Dendritic cell treated with granulocyte-macrophage colony-stimulating factor and Interleukin-4, amounts not matched to agents 40 ng/mL and 50 ng/mL, for 4 days (primary cell): ENCODE measurements at regions of chr19 and their contacts with region 1.

Region 1: DNA sequence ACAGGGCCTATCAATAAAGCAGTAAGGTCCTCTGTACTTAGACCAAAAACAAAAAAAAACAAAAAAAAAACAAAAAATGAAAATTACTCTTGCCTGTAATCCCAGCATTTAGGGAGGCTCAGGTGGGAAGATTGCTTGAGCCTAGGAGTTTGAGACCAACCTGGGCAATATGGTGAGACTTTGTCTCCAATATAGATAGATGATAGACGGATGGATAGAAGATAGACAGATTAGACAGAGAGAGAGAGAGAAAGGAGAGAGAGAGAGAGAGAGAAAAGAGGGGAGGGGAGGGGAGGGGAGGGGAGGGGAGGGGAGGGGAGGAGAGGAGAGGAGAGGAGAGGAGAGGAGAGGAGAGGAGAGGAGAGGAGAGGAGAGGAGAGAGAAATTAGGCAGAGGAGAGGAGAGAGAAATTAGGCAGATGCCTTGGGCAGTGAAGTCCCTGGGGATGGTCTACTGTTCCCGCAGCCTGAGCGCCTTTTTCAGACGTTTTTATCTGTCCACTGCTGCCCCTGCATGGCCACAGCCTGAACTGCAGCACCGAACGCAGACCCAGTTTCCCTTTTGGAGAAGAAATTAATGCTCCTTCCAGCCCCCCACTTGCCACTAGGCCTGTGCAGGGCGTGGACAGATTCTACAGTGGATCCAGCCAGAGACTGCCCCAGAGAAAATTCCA is 9.8 kb upstream of the ZNF627 start:
- H3K4me3 Mint-ChIP-seq: no peak overlapping the region
- H3K27ac Mint-ChIP-seq: peak overlapping the region; percentile 74
- H3K4me1 Mint-ChIP-seq: peaks cover 52% of the 10 kb centered on the region
- H3K27me3 Mint-ChIP-seq: no peaks in the 10 kb centered on the region

Region 2: DNA sequence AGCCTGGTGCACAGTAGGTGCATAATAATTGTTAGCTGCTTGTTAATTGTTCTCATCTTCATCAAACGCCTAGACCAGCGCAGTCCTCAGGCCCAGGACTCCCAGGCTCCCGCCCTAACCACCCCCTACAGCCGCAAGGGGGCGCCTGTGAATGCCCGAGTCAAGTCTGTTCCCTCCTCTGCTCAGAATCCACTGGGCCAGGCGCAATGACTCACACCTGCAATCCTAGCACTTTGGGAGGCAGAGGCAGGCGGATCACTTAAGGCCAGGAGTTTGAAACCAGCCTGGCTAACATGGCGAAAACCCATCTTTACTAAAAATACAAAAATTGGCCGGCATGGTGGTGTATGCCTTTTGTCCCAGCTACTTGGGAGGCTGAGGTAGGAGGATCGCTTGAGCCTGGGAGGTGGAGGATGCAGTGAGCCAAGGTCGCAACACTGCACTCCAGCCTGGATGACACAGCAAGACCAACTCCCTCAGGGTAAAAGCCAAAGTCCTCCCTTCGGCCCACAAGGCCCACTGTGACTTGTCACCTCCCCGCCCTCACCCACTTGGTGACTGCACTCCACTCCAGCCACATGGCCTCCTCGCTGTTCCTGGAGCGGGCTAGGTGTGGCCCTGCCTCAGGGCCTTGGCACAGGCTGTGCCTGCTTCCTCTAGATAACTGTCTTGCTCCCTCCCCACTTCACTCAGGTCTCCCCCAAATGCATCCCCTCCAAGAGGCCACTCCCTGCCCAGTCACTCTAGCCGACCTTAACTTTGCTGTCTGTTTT is 90.9 kb before region 1 on chr19:
- intact Hi-C with region 1: loop called (anchors 2 kb)
- H3K4me3 Mint-ChIP-seq: no peak overlapping the region
- H3K27ac Mint-ChIP-seq: no peak overlapping the region
- H3K4me1 Mint-ChIP-seq: peaks cover 5% of the 10 kb centered on the region
- H3K27me3 Mint-ChIP-seq: no peaks in the 10 kb centered on the region

Region 3: DNA sequence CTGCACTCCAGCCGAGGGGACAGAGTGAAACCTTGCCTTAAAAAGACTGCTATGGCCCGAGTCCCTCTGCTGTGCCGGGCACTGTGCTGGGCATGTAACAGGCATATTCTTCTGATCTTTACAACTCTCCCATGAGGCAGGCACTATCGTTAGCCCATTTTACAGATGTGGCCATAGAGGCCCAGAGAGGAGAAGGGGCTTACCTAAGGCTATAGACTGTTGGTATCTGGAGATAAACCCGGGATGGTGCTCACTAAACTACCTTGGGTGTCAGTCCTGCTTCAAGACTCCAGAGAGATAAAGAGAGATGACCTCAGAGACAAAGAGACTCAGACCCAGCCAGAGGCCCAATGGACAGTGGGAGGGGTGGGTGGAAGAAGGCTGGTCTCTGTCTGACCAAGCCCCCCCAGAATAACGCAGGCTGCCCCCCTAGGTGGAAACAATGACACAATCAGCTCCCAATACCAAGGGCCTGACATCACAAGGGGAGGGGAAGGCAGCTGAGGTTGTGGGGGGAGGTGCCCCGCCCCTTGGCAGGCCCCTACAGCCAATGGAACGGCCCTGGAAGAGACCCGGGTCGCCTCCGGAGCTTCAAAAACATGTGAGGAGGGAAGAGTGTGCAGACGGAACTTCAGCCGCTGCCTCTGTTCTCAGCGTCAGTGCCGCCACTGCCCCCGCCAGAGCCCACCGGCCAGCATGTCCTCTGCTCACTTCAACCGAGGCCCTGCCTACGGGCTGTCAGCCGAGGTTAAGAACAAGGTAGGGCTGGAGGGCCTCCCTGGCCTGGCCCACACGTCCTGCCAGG is 49.0 kb before region 1 on chr19 and contains the start of gene CNN1:
- intact Hi-C with region 1: loop called (anchors 2 kb)
- H3K4me3 Mint-ChIP-seq: no peak within 1 kb of the TSS
- H3K27ac Mint-ChIP-seq: no peak within 1 kb of the TSS
- H3K4me1 Mint-ChIP-seq: peaks cover 18% of the 10 kb centered on the region
- H3K27me3 Mint-ChIP-seq: peaks cover 38% of the 10 kb centered on the region

Region 4: DNA sequence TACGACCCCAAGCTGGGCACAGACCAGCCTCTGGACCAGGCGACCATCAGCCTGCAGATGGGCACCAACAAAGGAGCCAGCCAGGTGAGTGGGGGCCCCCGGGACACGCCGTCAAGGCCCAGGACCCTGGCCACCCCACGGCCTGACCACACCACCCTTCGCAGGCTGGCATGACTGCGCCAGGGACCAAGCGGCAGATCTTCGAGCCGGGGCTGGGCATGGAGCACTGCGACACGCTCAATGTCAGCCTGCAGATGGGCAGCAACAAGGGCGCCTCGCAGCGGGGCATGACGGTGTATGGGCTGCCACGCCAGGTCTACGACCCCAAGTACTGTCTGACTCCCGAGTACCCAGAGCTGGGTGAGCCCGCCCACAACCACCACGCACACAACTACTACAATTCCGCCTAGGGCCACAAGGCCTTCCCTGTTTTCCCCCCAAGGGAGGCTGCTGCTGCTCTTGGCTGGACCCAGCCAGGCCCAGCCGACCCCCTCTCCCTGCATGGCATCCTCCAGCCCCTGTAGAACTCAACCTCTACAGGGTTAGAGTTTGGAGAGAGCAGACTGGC is 38.0 kb before region 1 on chr19:
- intact Hi-C with region 1: no loop called
- H3K4me3 Mint-ChIP-seq: no peak overlapping the region
- H3K27ac Mint-ChIP-seq: no peak overlapping the region
- H3K4me1 Mint-ChIP-seq: no peaks in the 10 kb centered on the region
- H3K27me3 Mint-ChIP-seq: peaks cover 12% of the 10 kb centered on the region

Region 5: DNA sequence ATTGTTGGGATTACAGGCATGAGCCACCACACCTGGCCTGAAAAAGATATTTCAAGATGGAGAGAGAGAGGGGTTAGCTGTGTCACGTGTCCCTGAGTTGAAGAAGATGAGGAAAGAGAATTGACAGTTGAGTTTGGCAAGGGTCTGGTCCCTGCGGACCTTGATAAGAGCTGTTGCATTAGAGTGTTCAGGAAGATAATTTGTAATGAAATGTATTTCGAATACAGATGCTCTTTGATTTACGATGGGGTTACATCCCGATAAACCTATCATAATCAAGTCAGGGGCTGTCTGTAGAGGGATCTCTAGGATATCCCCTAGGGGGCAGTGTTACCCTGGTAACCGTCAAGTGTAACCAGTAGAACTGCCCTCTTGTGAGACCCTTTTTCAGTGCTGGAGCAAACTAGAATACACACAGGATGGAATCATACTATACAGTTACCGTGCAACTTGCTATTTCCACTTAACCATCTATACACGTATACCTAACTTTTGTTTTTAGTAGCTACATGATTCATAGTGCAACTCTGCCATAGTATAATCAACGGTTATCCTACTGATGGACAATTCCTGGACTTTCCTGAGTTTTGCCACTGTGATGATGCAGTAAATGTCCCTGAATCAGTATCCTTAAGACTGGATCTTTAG is 26.9 kb before region 1 on chr19:
- intact Hi-C with region 1: loop called (anchors 1 kb)
- H3K4me3 Mint-ChIP-seq: peak overlapping the region; percentile 33
- H3K27ac Mint-ChIP-seq: no peak overlapping the region
- H3K4me1 Mint-ChIP-seq: peaks cover 62% of the 10 kb centered on the region
- H3K27me3 Mint-ChIP-seq: no peaks in the 10 kb centered on the region

Region 6: DNA sequence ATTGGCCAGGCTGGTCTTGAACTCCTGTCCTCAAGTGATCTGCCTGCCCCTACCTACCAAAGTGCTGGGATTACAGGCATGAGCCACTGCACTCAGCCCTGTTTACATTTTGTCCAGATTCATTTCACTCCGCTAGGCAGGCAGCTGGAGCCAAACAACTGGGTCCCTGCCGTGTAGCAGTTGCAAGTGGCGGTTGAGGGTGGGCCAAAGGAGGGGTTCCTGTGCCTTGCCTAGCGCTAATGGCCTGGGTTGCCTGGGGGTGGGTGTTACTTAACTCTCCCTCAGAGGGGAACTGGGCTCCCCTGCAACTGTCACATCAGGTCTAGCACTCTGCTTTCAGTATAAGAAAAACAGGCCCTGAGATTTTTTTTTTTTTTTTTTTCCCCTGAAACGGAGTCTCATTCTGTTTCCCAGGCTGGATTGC is 17.4 kb before region 1 on chr19:
- intact Hi-C with region 1: loop called (anchors 2 kb)
- H3K4me3 Mint-ChIP-seq: no peak overlapping the region
- H3K27ac Mint-ChIP-seq: peak overlapping the region; percentile 70
- H3K4me1 Mint-ChIP-seq: peaks cover 48% of the 10 kb centered on the region
- H3K27me3 Mint-ChIP-seq: no peaks in the 10 kb centered on the region

Region 7: GRCh38 chr19:11659612-11660011 is 72.2 kb after region 1 on chr19:
- intact Hi-C with region 1: no loop called
- H3K4me3 Mint-ChIP-seq: no peak overlapping the region
- H3K27ac Mint-ChIP-seq: no peak overlapping the region
- H3K4me1 Mint-ChIP-seq: no peaks in the 10 kb centered on the region
- H3K27me3 Mint-ChIP-seq: no peaks in the 10 kb centered on the region